ENCODE measurements at regions of chr9 and their contacts with region 1.

Region 1: GRCh38 chr9:84856181-84856632 is 186.7 kb downstream of the NTRK2 start:
- DNase-seq: no peak
- CTCF ChIP-seq: no peak

Region 2: DNA sequence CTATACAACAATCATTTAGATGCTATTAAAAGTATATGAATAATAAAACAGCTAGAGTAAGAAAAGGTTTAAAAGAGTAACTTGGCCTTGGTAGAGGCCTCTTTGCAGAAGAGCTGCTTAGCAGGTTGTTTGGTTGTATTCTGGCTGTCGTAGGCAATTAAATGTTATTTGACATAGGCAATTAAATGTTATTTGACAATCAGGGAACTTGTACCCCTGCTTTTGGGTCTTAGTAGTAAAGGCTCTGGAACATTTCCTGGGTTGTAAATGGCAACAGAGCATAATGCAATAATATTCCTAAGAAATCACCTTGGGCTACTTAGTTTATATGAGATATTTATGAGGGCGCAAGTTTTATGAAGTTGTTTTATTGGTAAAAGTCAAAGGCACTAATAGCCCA is 431.3 kb before region 1 on chr9:
- CTCF ChIA-PET with region 1: no interaction called
- POLR2A ChIA-PET with region 1: no interaction called
- DNase-seq: no peak
- CTCF ChIP-seq: no peak

Region 3: GRCh38 chr9:84866396-84867175 is 10.4 kb after region 1 on chr9:
- CTCF ChIA-PET with region 1: interaction called, 10 read pairs
- POLR2A ChIA-PET with region 1: no interaction called
- DNase-seq: no peak
- CTCF ChIP-seq: no peak

Region 4: DNA sequence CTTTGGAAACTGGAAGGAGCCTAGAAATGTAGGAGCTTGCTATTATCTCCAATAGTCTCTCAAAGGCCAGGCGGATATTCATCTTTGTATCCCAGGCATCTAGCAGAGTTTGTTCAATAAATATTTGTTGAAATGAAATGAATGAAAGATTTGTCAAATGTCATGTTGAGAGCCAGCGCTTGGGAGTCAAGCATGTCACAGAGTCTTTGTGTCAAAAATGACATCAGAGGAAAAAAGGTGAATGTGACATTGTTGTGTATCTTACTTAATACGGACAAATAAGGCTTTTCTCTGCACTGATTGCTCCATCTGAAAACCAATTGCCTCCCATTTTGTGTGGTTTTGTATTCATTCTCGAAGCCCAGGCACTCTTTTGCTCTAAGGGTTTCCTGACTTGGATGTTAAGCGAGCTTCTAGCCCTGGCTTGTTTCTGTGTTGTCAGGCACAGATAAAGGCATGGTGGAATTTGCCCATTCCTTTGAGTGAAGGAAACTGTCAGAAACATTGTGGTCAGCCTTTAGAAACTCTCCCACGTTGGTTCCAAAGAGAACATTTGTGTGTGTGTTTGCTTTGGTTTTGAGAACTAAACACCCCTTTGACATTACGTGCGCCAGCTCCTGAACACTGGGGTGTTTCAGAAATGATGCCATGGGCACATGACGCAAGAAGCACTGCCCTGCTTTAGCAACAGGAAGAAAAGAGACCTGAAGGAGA is 134.1 kb after region 1 on chr9:
- CTCF ChIA-PET with region 1: no interaction called
- POLR2A ChIA-PET with region 1: no interaction called
- DNase-seq: no peak
- CTCF ChIP-seq: no peak

Region 5: GRCh38 chr9:85155352-85155751 is 299.1 kb after region 1 on chr9:
- CTCF ChIA-PET with region 1: no interaction called
- POLR2A ChIA-PET with region 1: no interaction called
- DNase-seq: no peak
- CTCF ChIP-seq: no peak